A549 (cell line): ENCODE measurements at regions of chr15 and their contacts with region 1.

Region 1: GRCh38 chr15:68650901-68651709 is 72.3 kb downstream of the CORO2B start:
- DNase-seq: peak; percentile 78 to 90
- ATAC-seq: peak; percentile 93 to 99
- H3K4me3 ChIP-seq: no peak overlapping the region
- H3K27ac ChIP-seq: peak overlapping the region in 1 of 2 experiments; percentile 30; a peak in 2 of 6 replicates
- H3K4me1 ChIP-seq: no peaks in the 10 kb centered on the region
- CTCF ChIP-seq: peak; percentile 86
- EP300 ChIP-seq: no peak
- POLR2A ChIP-seq: no peak
- RAD21 ChIP-seq: peak; percentile 79

Region 2: DNA sequence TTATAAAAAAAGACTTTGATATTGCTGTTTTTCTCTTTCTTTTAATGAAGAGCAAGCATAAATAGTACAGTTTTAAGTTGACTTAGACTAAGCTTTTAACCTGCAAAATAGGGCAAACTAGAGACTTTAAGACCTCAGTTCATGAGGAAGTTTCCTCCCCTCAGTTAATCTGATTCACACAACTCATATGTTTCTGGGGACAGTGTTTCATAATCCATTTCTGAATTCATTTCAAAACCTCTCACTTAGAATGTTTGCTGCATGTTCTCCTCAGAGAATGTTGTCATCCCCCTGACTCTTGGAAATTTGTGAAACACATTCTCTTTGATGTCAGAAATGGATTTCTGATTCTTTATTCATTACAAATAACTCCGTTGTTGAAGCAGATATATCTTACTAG is 905.1 kb before region 1 on chr15:
- CTCF ChIA-PET with region 1: no interaction called
- POLR2A ChIA-PET with region 1: no interaction called
- DNase-seq: no peak
- ATAC-seq: no peak
- H3K4me3 ChIP-seq: no peak overlapping the region
- H3K27ac ChIP-seq: no peak overlapping the region
- H3K4me1 ChIP-seq: peaks cover 11% of the 10 kb centered on the region; the same call in 2 of the 3 replicates
- CTCF ChIP-seq: no peak
- EP300 ChIP-seq: no peak
- POLR2A ChIP-seq: no peak
- RAD21 ChIP-seq: no peak

Region 3: DNA sequence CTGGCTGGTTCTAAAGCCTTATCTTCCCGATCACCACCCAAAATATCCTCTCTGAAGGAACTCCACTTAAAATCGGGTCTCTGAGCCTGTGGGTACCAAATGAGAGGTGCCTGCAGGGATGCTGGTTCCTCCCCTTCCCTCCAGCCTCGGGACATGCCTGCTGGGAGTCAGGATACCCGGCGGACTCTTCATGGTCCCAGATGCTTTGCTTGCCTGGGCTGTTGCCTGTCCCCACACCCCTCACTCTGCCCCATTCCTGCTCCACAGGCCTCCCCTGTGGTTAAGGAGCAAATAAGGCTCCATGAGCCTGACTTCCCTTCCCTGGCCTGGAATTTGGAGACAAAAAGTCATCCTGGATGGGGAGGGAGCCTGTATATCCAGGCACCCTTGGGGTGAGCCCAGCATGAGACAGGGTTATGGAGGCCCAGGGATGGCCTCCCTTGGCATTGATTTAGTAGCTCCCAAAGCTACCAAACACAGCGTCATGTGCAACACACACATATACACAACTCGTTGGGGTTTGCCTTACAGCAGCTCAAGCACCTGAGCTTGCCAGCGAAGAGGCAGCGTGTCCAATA is 84.6 kb before region 1 on chr15:
- CTCF ChIA-PET with region 1: interaction called, 79 read pairs
- POLR2A ChIA-PET with region 1: no interaction called
- DNase-seq: no peak
- ATAC-seq: no peak; a peak in 1 of 6 replicates
- H3K4me3 ChIP-seq: no peak overlapping the region
- H3K27ac ChIP-seq: no peak overlapping the region
- H3K4me1 ChIP-seq: no peaks in the 10 kb centered on the region
- CTCF ChIP-seq: no peak
- EP300 ChIP-seq: no peak
- POLR2A ChIP-seq: no peak
- RAD21 ChIP-seq: no peak

Region 4: DNA sequence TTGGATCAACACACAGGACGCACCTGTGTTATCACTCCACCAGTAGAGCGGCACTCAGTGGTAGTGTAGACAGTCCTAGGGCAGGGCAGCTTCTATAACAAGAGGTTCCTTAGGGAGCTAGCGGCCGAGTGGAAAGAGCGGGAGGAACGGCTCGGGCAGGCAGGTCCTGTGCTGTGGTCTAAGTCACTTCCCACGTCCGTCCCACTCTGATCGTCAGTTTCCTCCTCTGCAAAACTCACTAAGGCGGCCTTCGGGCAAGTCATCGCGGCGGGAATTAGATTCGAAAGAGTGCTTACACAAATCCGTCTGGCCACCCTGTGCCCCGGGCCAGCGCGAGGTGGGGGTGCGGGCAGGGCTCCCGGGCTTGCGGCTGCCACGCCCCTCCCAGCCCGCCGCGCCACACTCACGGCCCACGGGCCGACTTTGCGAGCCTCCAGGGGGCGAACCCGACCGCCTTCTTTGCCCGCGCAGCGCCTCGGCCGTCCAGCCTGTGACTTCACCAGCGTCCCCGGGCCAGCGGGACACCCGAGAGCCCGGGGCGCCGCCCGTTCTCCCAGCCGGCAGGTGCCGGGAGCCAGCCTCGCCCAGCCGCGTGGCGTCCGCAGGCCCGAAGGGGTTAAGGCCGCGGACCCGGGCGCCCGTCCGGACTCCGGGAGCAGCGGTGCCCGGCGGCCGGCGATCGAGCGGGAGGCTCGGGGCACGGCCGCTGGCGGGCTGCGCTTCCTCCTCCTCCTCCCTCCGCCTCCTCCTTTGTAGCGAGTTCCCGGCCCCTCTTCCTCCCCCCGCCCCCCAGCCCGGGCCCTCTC is 72.7 kb before region 1 on chr15:
- CTCF ChIA-PET with region 1: interaction called, 34 read pairs
- POLR2A ChIA-PET with region 1: no interaction called
- DNase-seq: peak in 1 of 2 experiments; percentile 47
- ATAC-seq: peak; percentile 54 to 71
- H3K4me3 ChIP-seq: peak overlapping the region; percentile 63
- H3K27ac ChIP-seq: peak overlapping the region; percentile 67 to 81
- H3K4me1 ChIP-seq: 0 out of 3 replicates have a peak, but pooled peaks cover 4% of the 10 kb centered on the region
- CTCF ChIP-seq: peak; percentile 35; the same call in 2 of the 3 replicates
- EP300 ChIP-seq: no peak
- POLR2A ChIP-seq: no peak; the same call in 1 of the 2 replicates
- RAD21 ChIP-seq: peak in 1 of 2 experiments; percentile 43; a peak in 3 of 5 replicates

Region 5: GRCh38 chr15:68586274-68586961 is 64.7 kb before region 1 on chr15:
- CTCF ChIA-PET with region 1: interaction called, 27 read pairs
- POLR2A ChIA-PET with region 1: no interaction called
- DNase-seq: peak; percentile 68 to 80
- ATAC-seq: peak; percentile 78 to 87
- H3K4me3 ChIP-seq: no peak overlapping the region
- H3K27ac ChIP-seq: peak overlapping the region; percentile 38 to 72; a peak in 5 of 6 replicates
- H3K4me1 ChIP-seq: peaks cover 14% of the 10 kb centered on the region
- CTCF ChIP-seq: no peak
- EP300 ChIP-seq: no peak
- POLR2A ChIP-seq: no peak
- RAD21 ChIP-seq: no peak

Region 6: GRCh38 chr15:68603951-68604350 is 47.2 kb before region 1 on chr15:
- CTCF ChIA-PET with region 1: interaction called, 10 read pairs
- POLR2A ChIA-PET with region 1: no interaction called
- DNase-seq: no peak
- ATAC-seq: no peak
- H3K4me3 ChIP-seq: no peak overlapping the region
- H3K27ac ChIP-seq: no peak overlapping the region
- H3K4me1 ChIP-seq: no peaks in the 10 kb centered on the region
- CTCF ChIP-seq: no peak
- EP300 ChIP-seq: no peak
- POLR2A ChIP-seq: no peak
- RAD21 ChIP-seq: no peak

Region 7: GRCh38 chr15:68631601-68632051 is 19.5 kb before region 1 on chr15:
- CTCF ChIA-PET with region 1: interaction called, 66 read pairs
- POLR2A ChIA-PET with region 1: no interaction called
- DNase-seq: no peak
- ATAC-seq: peak in 1 of 2 experiments; percentile 54; a peak in 3 of 6 replicates
- H3K4me3 ChIP-seq: no peak overlapping the region
- H3K27ac ChIP-seq: no peak overlapping the region
- H3K4me1 ChIP-seq: no peaks in the 10 kb centered on the region
- CTCF ChIP-seq: no peak
- EP300 ChIP-seq: no peak
- POLR2A ChIP-seq: no peak
- RAD21 ChIP-seq: no peak

Region 8: GRCh38 chr15:68637767-68638404 is 13.2 kb before region 1 on chr15:
- CTCF ChIA-PET with region 1: interaction called, 66 read pairs
- POLR2A ChIA-PET with region 1: no interaction called
- DNase-seq: no peak
- ATAC-seq: no peak
- H3K4me3 ChIP-seq: no peak overlapping the region
- H3K27ac ChIP-seq: no peak overlapping the region
- H3K4me1 ChIP-seq: peaks cover 11% of the 10 kb centered on the region; the same call in 1 of the 3 replicates
- CTCF ChIP-seq: no peak
- EP300 ChIP-seq: no peak
- POLR2A ChIP-seq: no peak
- RAD21 ChIP-seq: no peak